ENCODE measurements at regions of chr13 and their contacts with region 1.

Region 1: DNA sequence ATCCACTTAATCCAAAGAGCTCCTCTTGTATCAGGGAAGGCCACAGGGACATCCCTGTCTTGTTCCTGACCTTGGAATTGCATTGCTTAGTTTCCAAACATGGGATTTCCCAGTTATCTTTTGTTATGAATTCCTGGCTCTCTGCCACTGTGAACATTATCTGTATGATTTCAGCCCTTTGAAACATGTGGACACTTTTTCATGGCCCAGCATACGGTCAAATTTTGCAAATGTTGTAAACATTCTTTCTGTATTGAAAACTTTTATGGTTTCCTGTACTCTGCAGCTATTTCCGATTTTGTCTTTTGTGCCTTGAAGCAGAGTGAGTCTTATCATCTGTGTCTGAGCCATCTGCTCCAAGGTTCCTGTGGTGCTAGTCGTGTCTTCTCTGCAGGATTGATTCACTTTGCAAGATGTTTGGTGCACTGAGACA is 4.5 kb upstream of the CFAP97D2 start:
- DNase-seq: peak in 1 of 14 experiments; percentile 22
- ATAC-seq: no peak
- H3K4me3 ChIP-seq: no peak overlapping the region
- H3K4me3 Mint-ChIP-seq: peak overlapping the region; percentile 11
- H3K27ac ChIP-seq: no peak overlapping the region
- H3K27ac Mint-ChIP-seq: peak overlapping the region; percentile 55
- H3K4me1 ChIP-seq: peaks cover 44% of the 10 kb centered on the region
- H3K4me1 Mint-ChIP-seq: peaks cover 42% of the 10 kb centered on the region
- H3K27me3 ChIP-seq: no peaks in the 10 kb centered on the region
- H3K27me3 Mint-ChIP-seq: no peaks in the 10 kb centered on the region
- CTCF ChIP-seq: no peak

Region 2: DNA sequence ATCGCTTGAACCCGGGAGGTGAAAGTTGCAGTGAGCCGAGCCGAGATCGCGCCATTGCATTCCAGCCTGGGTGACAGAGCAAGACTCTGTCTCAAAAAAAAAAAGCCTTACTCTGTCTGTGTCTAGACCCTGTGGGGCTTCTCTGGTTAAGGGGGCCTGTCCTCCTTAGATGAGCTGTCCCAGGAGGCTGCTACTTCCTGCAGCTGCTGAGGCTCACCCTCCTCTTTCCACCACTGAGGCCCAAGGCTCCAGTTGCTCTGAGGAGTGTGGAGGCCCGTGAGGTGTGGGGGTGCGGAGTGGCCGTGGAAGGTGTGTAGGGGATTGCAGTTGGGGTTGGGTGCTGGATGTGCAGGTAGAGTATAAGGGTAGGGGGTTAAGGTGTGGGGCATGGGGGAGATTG is 20.1 kb before region 1 on chr13:
- CTCF ChIA-PET with region 1: no interaction called
- POLR2A ChIA-PET with region 1: no interaction called
- intact Hi-C with region 1: no loop called
- DNase-seq: no peak
- ATAC-seq: peak; percentile 20
- H3K4me3 ChIP-seq: no peak overlapping the region
- H3K4me3 Mint-ChIP-seq: peak overlapping the region; percentile 70
- H3K27ac ChIP-seq: peak overlapping the region in 1 of 2 donors; percentile 31
- H3K27ac Mint-ChIP-seq: peak overlapping the region; percentile 95
- H3K4me1 ChIP-seq: peaks cover 75% of the 10 kb centered on the region
- H3K4me1 Mint-ChIP-seq: peaks cover 86% of the 10 kb centered on the region
- H3K27me3 ChIP-seq: no peaks in the 10 kb centered on the region
- H3K27me3 Mint-ChIP-seq: no peaks in the 10 kb centered on the region
- CTCF ChIP-seq: no peak

Region 3: GRCh38 chr13:114200399-114200911 is 25.9 kb after region 1 on chr13:
- CTCF ChIA-PET with region 1: no interaction called
- POLR2A ChIA-PET with region 1: no interaction called
- intact Hi-C with region 1: loop called in 1 of 2 experiments (anchors 2 kb)
- DNase-seq: no peak
- ATAC-seq: no peak
- H3K4me3 ChIP-seq: no peak overlapping the region
- H3K4me3 Mint-ChIP-seq: no peak overlapping the region
- H3K27ac ChIP-seq: no peak overlapping the region
- H3K27ac Mint-ChIP-seq: no peak overlapping the region
- H3K4me1 ChIP-seq: peaks cover 16% of the 10 kb centered on the region
- H3K4me1 Mint-ChIP-seq: peaks cover 42% of the 10 kb centered on the region
- H3K27me3 ChIP-seq: no peaks in the 10 kb centered on the region
- H3K27me3 Mint-ChIP-seq: no peaks in the 10 kb centered on the region
- CTCF ChIP-seq: no peak

Region 4: DNA sequence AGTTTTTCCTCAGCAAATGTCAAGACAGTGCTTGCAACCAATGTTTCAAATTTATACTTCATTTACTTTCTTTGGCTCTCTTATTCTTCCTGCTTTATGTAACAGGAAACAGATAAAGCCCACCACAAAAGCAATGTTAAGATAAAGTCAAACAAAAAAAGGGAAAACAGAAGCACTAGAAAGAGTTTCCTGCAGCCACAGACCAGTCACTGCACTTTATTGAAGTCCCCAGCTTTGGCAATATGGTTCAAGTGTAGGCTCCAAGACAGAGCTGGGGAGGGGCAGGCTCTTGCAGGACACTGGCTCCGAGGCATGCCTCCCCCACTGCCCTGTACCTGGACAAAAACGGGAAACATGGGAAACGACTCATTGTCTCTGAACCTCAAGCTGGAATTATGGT is 44.8 kb after region 1 on chr13:
- CTCF ChIA-PET with region 1: no interaction called
- POLR2A ChIA-PET with region 1: no interaction called
- intact Hi-C with region 1: no loop called
- DNase-seq: no peak
- ATAC-seq: no peak
- H3K4me3 ChIP-seq: no peak overlapping the region
- H3K4me3 Mint-ChIP-seq: peak overlapping the region; percentile 13
- H3K27ac ChIP-seq: no peak overlapping the region
- H3K27ac Mint-ChIP-seq: peak overlapping the region; percentile 85
- H3K4me1 ChIP-seq: peaks cover 22% of the 10 kb centered on the region
- H3K4me1 Mint-ChIP-seq: peaks cover 74% of the 10 kb centered on the region
- H3K27me3 ChIP-seq: no peaks in the 10 kb centered on the region
- H3K27me3 Mint-ChIP-seq: no peaks in the 10 kb centered on the region
- CTCF ChIP-seq: no peak

Measured in CD4-positive, alpha-beta T cell (primary cell).